Activated B cell treated with CpG ODN at 0.5 μM for 24 hours (primary cell): ENCODE measurements at regions of chr18 and their contacts with region 1.

Region 1: GRCh38 chr18:35005963-35006577 is 35.1 kb upstream of the MAPRE2 start:
- DNase-seq: no peak
- ATAC-seq: peak; percentile 83
- H3K4me3 Mint-ChIP-seq: no peak overlapping the region
- H3K27ac Mint-ChIP-seq: no peak overlapping the region
- H3K4me1 Mint-ChIP-seq: no peaks in the 10 kb centered on the region
- H3K27me3 Mint-ChIP-seq: no peaks in the 10 kb centered on the region
- CTCF ChIP-seq: peak; percentile 39

Region 2: DNA sequence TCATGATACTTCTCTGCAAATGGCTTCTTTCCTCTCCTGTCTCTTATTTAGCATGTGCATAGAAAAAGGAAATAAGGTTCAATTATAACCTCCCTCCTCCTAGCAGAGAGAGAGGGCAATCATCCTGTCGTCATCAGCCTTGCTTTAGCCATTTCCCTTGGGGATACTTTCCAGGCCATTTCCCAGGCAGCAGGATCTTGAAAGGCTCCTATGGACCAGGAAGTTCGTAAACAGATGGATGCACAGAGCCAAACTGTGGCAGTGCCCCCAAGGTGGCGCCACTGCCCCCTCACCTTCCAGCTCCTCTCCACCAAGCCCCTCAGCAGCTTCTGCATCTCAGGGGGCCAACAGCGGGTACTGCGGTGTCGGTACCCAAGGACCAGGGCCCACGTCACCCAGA is 138.6 kb before region 1 on chr18:
- CTCF ChIA-PET with region 1: no interaction called
- POLR2A ChIA-PET with region 1: no interaction called
- intact Hi-C with region 1: no loop called
- DNase-seq: no peak
- ATAC-seq: no peak
- H3K4me3 Mint-ChIP-seq: no peak overlapping the region
- H3K27ac Mint-ChIP-seq: no peak overlapping the region
- H3K4me1 Mint-ChIP-seq: no peaks in the 10 kb centered on the region
- H3K27me3 Mint-ChIP-seq: peaks cover 3% of the 10 kb centered on the region
- CTCF ChIP-seq: no peak

Region 3: GRCh38 chr18:35071819-35072247 is 65.8 kb after region 1 on chr18:
- CTCF ChIA-PET with region 1: interaction called, 9 read pairs
- POLR2A ChIA-PET with region 1: interaction called, 3 read pairs
- intact Hi-C with region 1: loop called (anchors 2 kb)
- DNase-seq: no peak
- ATAC-seq: no peak
- H3K4me3 Mint-ChIP-seq: no peak overlapping the region
- H3K27ac Mint-ChIP-seq: peak overlapping the region; percentile 54
- H3K4me1 Mint-ChIP-seq: peaks cover 44% of the 10 kb centered on the region
- H3K27me3 Mint-ChIP-seq: no peaks in the 10 kb centered on the region
- CTCF ChIP-seq: no peak

Region 4: DNA sequence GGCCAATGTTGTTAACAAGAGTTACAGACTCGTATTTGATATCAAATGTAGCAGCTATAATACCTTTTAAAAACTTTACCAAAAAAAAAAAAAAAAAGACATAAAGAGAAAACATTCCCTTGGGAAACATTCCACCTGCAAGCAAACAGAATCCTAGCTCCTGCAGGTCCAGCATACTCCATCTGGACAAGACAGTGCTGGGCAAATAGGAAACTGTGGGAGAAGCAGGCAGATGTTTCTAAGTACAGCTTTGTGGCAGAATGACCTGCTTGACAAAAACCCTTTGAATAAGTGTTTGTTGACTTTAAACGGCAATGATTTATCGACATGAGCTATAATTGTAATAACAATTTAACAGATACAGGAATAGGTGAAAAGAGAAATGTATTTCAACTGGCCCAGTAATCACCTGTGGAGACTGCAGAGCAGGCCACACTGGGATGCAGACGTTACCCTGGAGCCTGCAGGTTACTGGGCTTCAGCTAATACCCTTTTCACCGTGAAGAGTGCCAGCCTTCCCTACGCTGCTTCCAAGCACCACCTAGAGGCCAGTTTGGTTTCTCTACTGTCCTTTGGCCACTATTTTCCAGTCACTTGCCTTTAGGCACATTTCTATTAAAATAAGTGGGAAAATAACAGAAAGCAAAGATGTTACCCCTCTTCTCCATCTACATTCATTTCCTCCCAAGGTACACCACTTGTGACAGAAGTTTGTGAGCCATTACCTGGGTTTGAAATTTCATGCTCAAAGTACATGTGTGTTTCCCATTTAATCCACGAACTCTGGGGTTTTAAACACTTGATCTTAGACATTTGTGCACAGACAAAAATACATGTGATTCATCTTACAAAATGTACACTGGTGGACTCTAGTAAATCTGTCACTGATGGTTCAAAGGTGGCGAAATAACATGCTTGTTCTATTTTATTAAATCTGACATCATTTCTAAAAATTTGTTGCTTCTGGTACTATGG is 137.8 kb after region 1 on chr18:
- CTCF ChIA-PET with region 1: interaction called, 78 read pairs
- POLR2A ChIA-PET with region 1: no interaction called
- intact Hi-C with region 1: loop called (anchors 1 kb)
- DNase-seq: no peak
- ATAC-seq: peak; percentile 74
- H3K4me3 Mint-ChIP-seq: no peak overlapping the region
- H3K27ac Mint-ChIP-seq: no peak overlapping the region
- H3K4me1 Mint-ChIP-seq: peaks cover 49% of the 10 kb centered on the region
- H3K27me3 Mint-ChIP-seq: no peaks in the 10 kb centered on the region
- CTCF ChIP-seq: no peak

Region 5: DNA sequence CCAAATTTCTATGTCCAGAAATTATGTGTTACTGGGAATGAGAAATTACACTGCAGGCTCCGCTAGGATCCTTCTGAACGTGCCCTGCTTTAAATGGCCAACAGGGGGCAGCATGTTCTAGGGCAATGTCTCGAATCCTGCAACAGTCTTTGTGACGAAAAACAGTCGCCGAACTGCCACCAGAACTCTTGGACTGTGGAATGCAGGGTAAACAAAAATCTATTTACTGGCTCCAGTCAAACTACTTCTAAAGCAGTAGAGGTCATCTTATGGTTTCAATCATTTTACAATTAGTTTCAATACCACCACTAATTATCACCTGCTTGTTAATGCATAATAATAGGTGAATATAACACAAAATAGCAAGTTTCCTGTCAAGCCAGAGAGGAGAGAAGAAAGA is 225.0 kb after region 1 on chr18:
- CTCF ChIA-PET with region 1: interaction called, 7 read pairs
- POLR2A ChIA-PET with region 1: no interaction called
- intact Hi-C with region 1: loop called (anchors 1 kb)
- DNase-seq: peak; percentile 49
- ATAC-seq: peak; percentile 97
- H3K4me3 Mint-ChIP-seq: peak overlapping the region; percentile 36
- H3K27ac Mint-ChIP-seq: no peak overlapping the region
- H3K4me1 Mint-ChIP-seq: peaks cover 3% of the 10 kb centered on the region
- H3K27me3 Mint-ChIP-seq: no peaks in the 10 kb centered on the region
- CTCF ChIP-seq: peak; percentile 75

Region 6: GRCh38 chr18:35386600-35387351 is 380.7 kb after region 1 on chr18:
- CTCF ChIA-PET with region 1: interaction called, 10 read pairs
- POLR2A ChIA-PET with region 1: no interaction called
- intact Hi-C with region 1: loop called (anchors 1 kb)
- DNase-seq: no peak
- ATAC-seq: peak; percentile 95
- H3K4me3 Mint-ChIP-seq: no peak overlapping the region
- H3K27ac Mint-ChIP-seq: no peak overlapping the region
- H3K4me1 Mint-ChIP-seq: peaks cover 6% of the 10 kb centered on the region
- H3K27me3 Mint-ChIP-seq: peaks cover 18% of the 10 kb centered on the region
- CTCF ChIP-seq: no peak